Right ventricle myocardium inferior (tissue), 1 donor: ENCODE measurements at regions of chr15 and their contacts with region 1.

Region 1: DNA sequence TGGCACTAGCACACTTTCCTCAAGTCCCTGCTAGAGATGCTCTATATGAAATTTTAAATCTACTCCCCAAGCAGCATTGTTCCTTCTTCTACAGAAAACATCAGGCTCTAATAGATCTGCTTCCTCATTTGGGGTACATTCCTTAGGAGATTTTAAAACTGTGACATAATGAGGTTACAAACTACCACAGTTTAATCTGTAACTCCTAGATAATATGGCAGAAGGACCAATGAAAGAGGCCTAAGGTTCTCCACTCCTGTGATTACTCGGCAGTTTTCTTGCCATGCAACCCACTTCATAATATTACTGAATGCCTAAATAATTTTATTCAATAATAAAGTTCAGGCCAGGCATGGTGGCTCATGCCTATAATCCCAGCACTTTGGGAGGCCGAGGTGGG is 16.1 kb downstream of the ZNF106 start:
- DNase-seq: no peak
- ATAC-seq: no peak

Region 2: GRCh38 chr15:42273102-42273899 is 201.5 kb before region 1 on chr15 and contains the starts of genes GANC and TMEM87A:
- intact Hi-C with region 1: loop called (anchors 10 kb)
- DNase-seq: peak; percentile 98
- ATAC-seq: peak; percentile 99
- total RNA-seq, gene GANC: 16.3 TPM
- total RNA-seq, gene TMEM87A: 19.0 TPM

Region 3: DNA sequence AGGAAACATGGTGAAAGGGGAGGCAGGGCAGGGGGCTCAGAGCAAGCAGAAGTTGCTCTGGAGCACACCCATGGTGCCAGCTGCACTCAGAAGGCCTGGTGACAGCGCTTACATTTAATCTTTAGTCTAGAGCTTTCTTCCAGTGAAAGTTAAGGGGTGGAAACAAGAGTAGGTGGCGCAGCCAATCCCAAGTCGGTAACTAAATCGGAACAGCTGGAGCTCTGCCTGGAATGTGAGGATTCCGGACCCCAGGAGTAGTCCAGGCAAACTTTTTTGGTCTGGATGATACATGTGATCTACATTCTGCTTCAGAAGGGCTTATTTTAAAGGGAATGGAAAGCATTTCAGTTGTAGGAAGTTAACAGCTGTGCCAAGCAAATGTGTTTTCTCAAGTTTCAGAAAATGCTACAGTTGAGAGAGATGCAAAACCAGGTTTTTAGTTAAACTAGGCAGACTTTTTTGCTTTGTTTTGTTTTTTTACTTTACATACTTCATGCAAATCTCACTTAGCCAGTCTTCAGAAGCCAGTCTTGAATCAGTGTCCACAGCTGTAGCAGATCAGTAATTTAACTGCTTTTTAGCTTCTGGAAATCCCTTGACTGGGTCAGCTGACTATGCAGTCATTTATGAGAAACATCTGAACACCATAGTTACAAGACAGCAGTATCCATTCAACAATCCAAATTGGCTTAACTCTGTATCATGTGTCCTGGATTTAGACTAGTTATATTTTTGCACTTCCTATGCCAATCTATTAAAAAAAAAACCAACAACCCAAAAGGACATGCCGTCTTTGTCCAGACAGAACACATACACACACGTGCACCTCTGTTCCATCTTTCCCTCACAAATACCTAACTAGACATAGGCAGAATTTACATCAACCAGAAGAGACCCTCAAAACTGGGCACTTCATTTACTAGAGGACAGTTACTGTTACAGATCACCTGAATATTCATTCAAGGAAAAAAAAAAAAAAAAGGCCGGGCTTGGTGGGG is 17.1 kb before region 1 on chr15:
- intact Hi-C with region 1: loop called (anchors 2 kb)
- DNase-seq: peak; percentile 69
- ATAC-seq: peak; percentile 90